ENCODE measurements at regions of chr6 and their contacts with region 1.

Region 1: DNA sequence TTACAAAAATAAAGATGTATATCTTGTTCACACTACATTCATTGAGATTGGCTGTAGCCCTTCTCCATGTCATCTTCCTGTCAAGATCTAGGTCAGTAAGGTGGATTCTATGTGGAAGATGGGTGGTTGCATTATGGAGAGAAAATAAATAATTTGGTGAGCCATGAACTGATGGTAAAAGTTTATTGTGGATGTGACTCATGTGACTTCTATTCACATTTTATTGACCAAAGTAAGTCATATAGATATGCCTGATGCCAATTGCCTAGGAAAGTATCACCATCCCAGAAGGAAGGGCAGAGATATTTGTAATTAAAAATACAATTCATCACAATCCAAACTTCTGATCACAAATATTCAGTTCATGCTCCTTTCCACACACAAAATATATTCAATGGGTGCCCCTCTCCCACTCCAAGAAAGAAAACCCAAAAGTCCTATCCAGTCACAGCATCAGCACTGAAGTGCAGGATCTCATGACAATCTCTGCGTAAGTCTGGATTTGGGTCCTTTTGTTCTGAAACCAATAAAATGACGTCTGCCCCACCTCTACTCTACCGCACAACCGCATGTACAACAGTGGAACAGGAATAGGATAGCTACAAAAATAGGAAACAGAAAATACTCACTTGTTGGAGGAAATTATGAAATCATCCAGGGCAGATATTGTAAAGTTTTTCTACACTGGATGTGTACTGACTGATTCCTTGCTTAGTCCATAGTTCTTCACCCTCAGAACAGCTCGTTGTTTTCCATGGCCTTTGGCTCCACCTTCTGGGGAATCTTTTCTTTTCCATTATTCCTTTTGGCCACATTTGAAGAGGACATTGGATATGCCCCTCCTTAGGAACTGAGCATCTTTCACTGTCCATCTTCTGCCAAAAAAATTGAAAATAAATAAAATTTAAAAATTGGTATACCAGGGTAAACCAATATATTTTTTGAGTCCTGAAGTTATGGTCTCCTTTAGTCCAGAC is 16.1 kb upstream of the SLC17A3 start:
- DNase-seq: peak; percentile 42
- H3K4me3 ChIP-seq: no peak overlapping the region
- H3K27ac ChIP-seq: no peak overlapping the region
- H3K4me1 ChIP-seq: no peaks in the 10 kb centered on the region
- H3K27me3 ChIP-seq: no peaks in the 10 kb centered on the region
- CTCF ChIP-seq: peak; percentile 72

Region 2: GRCh38 chr6:25601800-25602673 is 288.1 kb before region 1 on chr6:
- CTCF ChIA-PET with region 1: no interaction called
- POLR2A ChIA-PET with region 1: no interaction called
- intact Hi-C with region 1: loop called (anchors 2 kb)
- DNase-seq: peak in 1 of 2 experiments; percentile 43
- H3K4me3 ChIP-seq: no peak overlapping the region
- H3K27ac ChIP-seq: no peak overlapping the region
- H3K4me1 ChIP-seq: no peaks in the 10 kb centered on the region
- H3K27me3 ChIP-seq: no peaks in the 10 kb centered on the region
- CTCF ChIP-seq: peak; percentile 85

Region 3: GRCh38 chr6:25717866-25718740 is 172.1 kb before region 1 on chr6:
- CTCF ChIA-PET with region 1: interaction called, 3 read pairs
- POLR2A ChIA-PET with region 1: no interaction called
- intact Hi-C with region 1: loop called (anchors 1 kb)
- DNase-seq: no peak
- H3K4me3 ChIP-seq: no peak overlapping the region
- H3K27ac ChIP-seq: no peak overlapping the region
- H3K4me1 ChIP-seq: no peaks in the 10 kb centered on the region
- H3K27me3 ChIP-seq: no peaks in the 10 kb centered on the region
- CTCF ChIP-seq: peak; percentile 83

Region 4: GRCh38 chr6:25835442-25836283 is 54.5 kb before region 1 on chr6:
- CTCF ChIA-PET with region 1: no interaction called
- POLR2A ChIA-PET with region 1: no interaction called
- intact Hi-C with region 1: no loop called
- DNase-seq: no peak
- H3K4me3 ChIP-seq: no peak overlapping the region
- H3K27ac ChIP-seq: no peak overlapping the region
- H3K4me1 ChIP-seq: no peaks in the 10 kb centered on the region
- H3K27me3 ChIP-seq: peaks cover 20% of the 10 kb centered on the region
- CTCF ChIP-seq: no peak

Region 5: GRCh38 chr6:25868784-25869183 is 21.4 kb before region 1 on chr6:
- CTCF ChIA-PET with region 1: no interaction called
- POLR2A ChIA-PET with region 1: no interaction called
- intact Hi-C with region 1: no loop called
- DNase-seq: no peak
- H3K4me3 ChIP-seq: no peak overlapping the region
- H3K27ac ChIP-seq: no peak overlapping the region
- H3K4me1 ChIP-seq: no peaks in the 10 kb centered on the region
- H3K27me3 ChIP-seq: no peaks in the 10 kb centered on the region
- CTCF ChIP-seq: no peak

Region 6: GRCh38 chr6:26097268-26097875 is 207.2 kb after region 1 on chr6:
- CTCF ChIA-PET with region 1: no interaction called
- POLR2A ChIA-PET with region 1: no interaction called
- intact Hi-C with region 1: loop called (anchors 2 kb)
- DNase-seq: peak; percentile 53 to 61
- H3K4me3 ChIP-seq: no peak overlapping the region
- H3K27ac ChIP-seq: no peak overlapping the region
- H3K4me1 ChIP-seq: peaks cover 6% of the 10 kb centered on the region
- H3K27me3 ChIP-seq: no peaks in the 10 kb centered on the region
- CTCF ChIP-seq: peak; percentile 89

Measured in PC-9 (cell line).